H1 (cell line): ENCODE measurements at regions of chr5 and their contacts with region 1.

Region 1: DNA sequence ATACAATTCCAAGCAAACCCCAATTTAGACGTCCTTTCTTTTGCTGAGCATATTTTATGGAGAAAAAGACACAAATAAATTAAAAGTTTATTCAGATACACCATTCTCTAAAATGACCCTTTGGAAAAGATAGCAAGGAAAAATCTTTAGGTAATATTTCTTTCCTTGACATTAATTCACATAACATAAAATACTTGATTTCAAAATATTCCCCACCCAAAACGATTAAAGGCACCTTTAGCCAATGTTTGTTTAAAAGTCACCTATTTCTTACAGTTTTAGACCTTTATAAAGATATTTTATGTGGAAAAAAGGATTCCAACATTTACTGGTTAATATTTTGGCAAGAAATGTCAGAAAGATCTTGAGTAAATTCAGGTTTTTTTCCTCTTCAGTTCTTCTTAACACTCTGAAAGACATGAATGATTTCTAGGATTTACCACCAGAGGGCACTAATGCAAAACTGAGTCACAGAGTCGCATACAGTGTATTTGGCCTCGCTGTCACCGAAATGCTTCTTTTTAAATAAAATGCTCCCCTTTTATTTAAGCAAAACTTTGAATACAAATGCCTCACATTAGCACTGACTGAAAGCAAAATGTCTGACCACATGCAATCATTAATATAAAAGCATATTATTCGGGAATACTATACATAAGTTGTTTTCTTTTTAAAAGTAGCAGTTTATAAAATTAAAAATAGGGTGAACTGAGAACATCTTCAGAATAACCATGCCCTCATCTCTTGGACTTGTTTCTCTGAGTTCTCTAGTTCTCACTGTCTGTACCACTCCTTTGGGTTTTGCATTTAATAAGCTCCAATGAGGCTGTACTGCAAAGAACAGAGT is 122.5 kb downstream of the SLC1A3 start:
- DNase-seq: no peak
- H3K4me3 ChIP-seq: no peak overlapping the region
- H3K27ac ChIP-seq: no peak overlapping the region
- H3K4me1 ChIP-seq: peaks cover 0 to 3% (median 0%) of the 10 kb centered on the region in 4 experiments; a peak in 3 of 7 replicates
- H3K27me3 ChIP-seq: no peaks in the 10 kb centered on the region
- CTCF ChIP-seq: peak in 2 of 3 experiments; percentile 51 to 63; a peak in 2 of 4 replicates
- EP300 ChIP-seq: no peak
- POLR2A ChIP-seq: no peak
- RAD21 ChIP-seq: peak; percentile 59 to 61

Region 2: DNA sequence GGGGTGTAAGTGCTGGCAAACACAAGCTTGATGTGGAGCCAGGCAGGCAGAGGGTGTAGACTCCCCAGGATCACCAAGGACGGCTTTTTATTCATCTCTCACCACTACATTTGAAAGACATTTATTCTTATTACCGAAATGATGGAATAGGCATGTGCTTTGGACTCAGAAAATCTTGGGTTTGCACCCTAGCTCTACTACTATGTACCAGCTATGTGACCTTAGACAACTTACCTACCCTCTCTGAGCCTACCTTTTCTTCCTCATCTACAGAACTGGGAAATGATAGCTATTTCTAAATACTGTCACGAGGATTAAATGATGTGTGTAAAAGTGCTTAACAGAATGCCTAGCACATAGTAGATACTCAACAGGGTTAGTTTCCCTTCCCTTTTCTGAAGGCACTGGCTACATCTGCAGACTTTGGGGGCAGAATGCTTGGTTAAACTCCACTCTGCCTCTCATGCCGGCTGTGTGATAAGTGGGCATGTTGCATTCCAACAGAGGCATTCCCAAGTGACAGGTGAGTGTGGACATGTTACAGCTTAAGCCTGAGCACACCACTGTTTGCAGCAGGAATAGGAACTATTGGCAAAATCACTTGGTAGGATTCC is 27.7 kb before region 1 on chr5:
- CTCF ChIA-PET with region 1: interaction called, 15 read pairs
- POLR2A ChIA-PET with region 1: no interaction called
- DNase-seq: no peak
- H3K4me3 ChIP-seq: no peak overlapping the region
- H3K27ac ChIP-seq: no peak overlapping the region
- H3K4me1 ChIP-seq: peaks cover 0 to 2% (median 0%) of the 10 kb centered on the region in 4 experiments; a peak in 1 of 7 replicates
- H3K27me3 ChIP-seq: no peaks in the 10 kb centered on the region
- CTCF ChIP-seq: no peak
- EP300 ChIP-seq: no peak
- POLR2A ChIP-seq: no peak
- RAD21 ChIP-seq: no peak

Region 3: GRCh38 chr5:36708996-36709395 is 19.9 kb before region 1 on chr5:
- CTCF ChIA-PET with region 1: interaction called, 20 read pairs
- POLR2A ChIA-PET with region 1: no interaction called
- DNase-seq: no peak
- H3K4me3 ChIP-seq: no peak overlapping the region
- H3K27ac ChIP-seq: no peak overlapping the region
- H3K4me1 ChIP-seq: no peaks in the 10 kb centered on the region
- H3K27me3 ChIP-seq: no peaks in the 10 kb centered on the region
- CTCF ChIP-seq: peak in 2 of 3 experiments; percentile 15 to 45; a peak in 2 of 4 replicates
- EP300 ChIP-seq: no peak
- POLR2A ChIP-seq: no peak
- RAD21 ChIP-seq: peak; percentile 46 to 56

Region 4: DNA sequence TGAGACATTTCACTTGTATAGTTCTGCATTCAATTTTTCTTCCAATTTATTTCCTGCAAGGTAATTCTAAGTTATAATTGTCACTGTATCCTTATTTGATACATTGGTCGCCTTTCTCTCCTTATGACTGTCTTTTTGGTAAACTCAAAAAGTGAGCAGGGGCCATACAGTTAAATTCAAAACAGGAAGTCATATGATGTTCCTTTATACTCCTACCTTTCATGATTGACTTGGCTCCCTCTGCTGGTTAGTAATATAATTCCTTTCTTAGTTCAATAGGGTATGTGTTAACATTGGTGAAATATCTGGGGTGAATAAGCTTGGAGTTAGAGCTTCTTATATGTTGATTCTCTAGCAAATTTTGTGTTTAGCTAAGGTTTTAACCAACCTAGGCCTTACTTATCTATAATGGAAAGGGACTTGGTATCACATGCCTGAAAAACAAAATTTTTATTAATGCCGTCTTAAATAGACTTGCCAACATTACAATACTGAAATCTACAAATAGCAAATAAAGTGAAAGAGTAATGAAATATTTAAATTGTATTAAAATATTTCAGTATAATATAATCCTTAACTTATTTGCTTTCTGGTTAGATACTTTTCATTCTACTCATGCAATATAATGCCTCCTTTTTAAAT is 141.6 kb after region 1 on chr5:
- CTCF ChIA-PET with region 1: interaction called, 121 read pairs
- POLR2A ChIA-PET with region 1: no interaction called
- DNase-seq: no peak
- H3K4me3 ChIP-seq: no peak overlapping the region
- H3K27ac ChIP-seq: no peak overlapping the region
- H3K4me1 ChIP-seq: peaks cover 0 to 4% (median 0%) of the 10 kb centered on the region in 4 experiments; a peak in 4 of 7 replicates
- H3K27me3 ChIP-seq: no peaks in the 10 kb centered on the region
- CTCF ChIP-seq: peak in 2 of 3 experiments; percentile 36 to 57; a peak in 2 of 4 replicates
- EP300 ChIP-seq: no peak
- POLR2A ChIP-seq: no peak
- RAD21 ChIP-seq: peak; percentile 52 to 59

Region 5: DNA sequence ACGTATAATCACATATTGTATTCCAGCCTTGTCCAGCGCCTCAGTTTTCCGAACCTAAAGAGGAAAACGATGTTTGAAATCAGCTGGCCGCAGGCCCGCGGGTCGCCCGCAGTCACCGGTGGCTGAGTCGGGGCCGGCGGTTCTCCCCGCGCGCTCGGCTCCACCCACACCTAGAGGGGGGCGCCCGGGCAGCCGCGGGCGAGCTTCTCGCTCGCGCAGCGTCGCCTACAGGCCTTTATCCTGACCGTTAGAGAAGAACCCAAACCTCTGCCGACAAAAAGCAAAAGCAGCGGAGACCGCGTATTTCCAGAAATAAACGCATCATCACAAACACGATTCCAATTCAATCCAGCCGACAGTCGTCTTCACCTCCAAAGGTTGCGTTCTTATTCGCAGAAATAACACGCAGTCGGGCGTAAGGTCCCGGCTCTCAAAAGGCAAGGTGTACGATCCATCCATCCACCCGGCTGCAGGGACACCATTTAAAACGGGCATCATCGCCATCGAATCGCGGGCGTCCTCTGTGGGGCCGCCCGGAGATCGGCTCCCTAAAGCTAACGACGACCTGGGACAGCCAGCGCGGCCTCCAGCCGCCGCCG is 147.0 kb after region 1 on chr5:
- CTCF ChIA-PET with region 1: interaction called, 121 read pairs
- POLR2A ChIA-PET with region 1: no interaction called
- DNase-seq: peak in 1 of 2 experiments; percentile 68
- H3K4me3 ChIP-seq: peak overlapping the region; percentile 73 to 96 (median 94)
- H3K27ac ChIP-seq: peak overlapping the region; percentile 71
- H3K4me1 ChIP-seq: peaks cover 0 to 4% (median 0%) of the 10 kb centered on the region in 4 experiments; a peak in 3 of 7 replicates
- H3K27me3 ChIP-seq: no peaks in the 10 kb centered on the region
- CTCF ChIP-seq: peak; percentile 38 to 46 (median 44); a peak in 3 of 4 replicates
- EP300 ChIP-seq: no peak
- POLR2A ChIP-seq: no peak
- RAD21 ChIP-seq: peak; percentile 20 to 57